Endothelial cell of umbilical vein (primary cell): ENCODE measurements at regions of chr5 and their contacts with region 1.

Region 1: GRCh38 chr5:75511435-75512384 is at the starts of genes CERT1 and POLK:
- DNase-seq: peak; percentile 99
- H3K4me3 ChIP-seq: peak within 1 kb of the TSS; percentile 83 to 96 (median 91)
- H3K27ac ChIP-seq: peak within 1 kb of the TSS; percentile 66
- H3K4me1 ChIP-seq: peaks cover 22% of the 10 kb centered on the region
- H3K27me3 ChIP-seq: no peaks in the 10 kb centered on the region
- CTCF ChIP-seq: no peak
- POLR2A ChIP-seq: peak; percentile 78
- total RNA-seq, gene CERT1: 21.3 and 25.6 TPM in 2 replicates
- total RNA-seq, gene POLK: 22.1 and 27.3 TPM in 2 replicates

Region 2: DNA sequence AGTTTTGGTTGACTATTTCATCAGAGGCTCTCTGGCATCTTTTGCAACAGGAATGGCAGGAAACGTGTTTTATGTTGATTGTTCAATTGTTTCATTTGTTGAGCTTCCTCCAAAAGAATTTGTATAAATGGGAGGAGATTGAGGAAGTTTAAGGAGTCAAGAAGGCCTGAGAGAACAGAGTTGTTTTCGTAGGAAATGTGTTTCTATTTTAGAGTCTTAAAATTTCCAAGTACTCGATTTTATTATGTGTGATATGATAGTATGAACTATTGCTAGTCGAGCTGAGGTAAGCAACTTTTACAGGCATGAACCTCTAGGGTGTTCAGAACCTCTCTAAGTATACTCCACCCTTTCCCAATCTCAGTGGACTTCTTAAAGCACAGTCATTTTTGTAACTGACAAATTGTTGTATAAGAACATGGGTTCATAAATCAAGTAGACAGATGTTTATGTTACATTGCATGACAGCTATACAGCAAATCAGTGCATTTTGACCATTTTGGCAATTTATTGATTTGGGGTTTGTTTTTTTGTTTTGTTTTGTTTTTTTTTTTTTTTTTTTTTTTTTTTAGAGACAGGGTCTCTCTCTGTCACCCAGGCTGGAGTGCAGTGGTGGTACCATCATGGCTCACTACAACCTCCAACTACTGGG is 47.4 kb after region 1 on chr5:
- CTCF ChIA-PET with region 1: no interaction called
- POLR2A ChIA-PET with region 1: no interaction called
- dilution Hi-C with region 1: no loop called
- intact Hi-C with region 1: loop called (anchors 1 kb)
- DNase-seq: peak; percentile 94
- H3K4me3 ChIP-seq: peak overlapping the region in 2 of 3 experiments; percentile 28 to 64
- H3K27ac ChIP-seq: peak overlapping the region; percentile 91
- H3K4me1 ChIP-seq: peaks cover 28% of the 10 kb centered on the region
- H3K27me3 ChIP-seq: no peaks in the 10 kb centered on the region
- CTCF ChIP-seq: no peak
- POLR2A ChIP-seq: no peak

Region 3: GRCh38 chr5:75566710-75567309 is 55.1 kb after region 1 on chr5:
- CTCF ChIA-PET with region 1: interaction called, 3 read pairs
- POLR2A ChIA-PET with region 1: interaction called, 3 read pairs
- dilution Hi-C with region 1: no loop called
- intact Hi-C with region 1: loop called (anchors 1 kb)
- DNase-seq: peak; percentile 96
- H3K4me3 ChIP-seq: peak overlapping the region in 2 of 3 experiments; percentile 10 to 35
- H3K27ac ChIP-seq: peak overlapping the region; percentile 90
- H3K4me1 ChIP-seq: peaks cover 32% of the 10 kb centered on the region
- H3K27me3 ChIP-seq: no peaks in the 10 kb centered on the region
- CTCF ChIP-seq: no peak
- POLR2A ChIP-seq: no peak

Region 4: GRCh38 chr5:75668977-75669689 is 157.4 kb after region 1 on chr5:
- CTCF ChIA-PET with region 1: interaction called, 4 read pairs
- POLR2A ChIA-PET with region 1: no interaction called
- dilution Hi-C with region 1: no loop called
- intact Hi-C with region 1: loop called (anchors 1 kb)
- DNase-seq: peak; percentile 95
- H3K4me3 ChIP-seq: peak overlapping the region in 1 of 3 experiments; percentile 38
- H3K27ac ChIP-seq: peak overlapping the region; percentile 71
- H3K4me1 ChIP-seq: peaks cover 23% of the 10 kb centered on the region
- H3K27me3 ChIP-seq: no peaks in the 10 kb centered on the region
- CTCF ChIP-seq: no peak
- POLR2A ChIP-seq: peak; percentile 57

Region 5: GRCh38 chr5:75717082-75717922 is 205.6 kb after region 1 on chr5 and contains the start of gene POC5:
- CTCF ChIA-PET with region 1: no interaction called
- POLR2A ChIA-PET with region 1: no interaction called
- dilution Hi-C with region 1: no loop called
- intact Hi-C with region 1: loop called (anchors 1 kb)
- DNase-seq: peak; percentile 98
- H3K4me3 ChIP-seq: peak within 1 kb of the TSS; percentile 49 to 88 (median 86)
- H3K27ac ChIP-seq: peak within 1 kb of the TSS; percentile 53
- H3K4me1 ChIP-seq: peaks cover 7% of the 10 kb centered on the region
- H3K27me3 ChIP-seq: peaks cover 8 to 9% of the 10 kb centered on the region in 2 experiments
- CTCF ChIP-seq: no peak
- POLR2A ChIP-seq: no peak
- total RNA-seq, gene POC5: 7.8 and 8.3 TPM in 2 replicates